Tibial artery (tissue), 4 donors: ENCODE measurements at regions of chr12 and their contacts with region 1.

Region 1: DNA sequence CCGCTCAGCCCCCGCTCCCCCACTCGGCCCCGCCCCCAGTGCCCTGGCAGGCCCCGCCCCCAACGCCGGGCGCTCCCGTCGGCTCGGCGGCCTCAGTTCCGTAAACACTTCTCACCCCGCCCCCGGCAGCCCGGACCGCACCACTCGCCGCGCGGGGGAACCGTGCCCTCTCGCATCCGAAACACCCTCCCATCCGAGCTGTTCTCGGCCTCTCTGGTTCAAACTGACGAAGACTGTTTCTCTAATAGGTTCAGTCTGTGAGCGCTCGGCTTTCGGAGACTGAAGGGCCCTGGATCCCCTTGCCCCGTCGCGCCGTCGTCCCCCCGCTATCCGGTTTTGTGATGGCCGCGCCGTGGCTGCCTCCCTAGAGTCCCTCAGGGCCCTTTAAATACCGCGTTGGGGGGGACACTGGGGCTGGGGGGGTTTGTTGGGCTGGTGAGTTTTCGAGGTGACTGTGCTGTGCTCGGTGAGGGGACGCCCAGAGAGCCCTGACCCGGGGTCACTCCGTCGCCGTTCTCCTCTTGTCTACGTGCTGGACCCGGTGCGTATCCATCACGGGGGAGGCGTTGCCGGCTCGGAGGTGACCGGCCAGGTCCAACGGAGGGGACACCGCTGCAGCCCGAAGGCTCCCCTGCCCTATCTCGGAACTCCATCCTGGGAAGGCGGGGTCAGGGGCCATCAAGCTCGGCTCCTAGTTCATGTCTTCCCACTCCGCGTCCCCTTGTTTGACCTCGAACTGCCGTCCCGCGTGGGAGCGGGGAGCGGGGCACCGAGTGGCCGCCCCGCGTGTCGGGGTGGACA is at the start of gene TCP11L2:
- DNase-seq: peak; percentile 88 to 94
- H3K4me3 ChIP-seq: peak within 1 kb of the TSS; percentile 81 to 97
- H3K27ac ChIP-seq: peak within 1 kb of the TSS; percentile 88 to 97
- H3K4me1 ChIP-seq: peaks cover 4 to 41% (median 27%) of the 10 kb centered on the region in 4 donors
- H3K27me3 ChIP-seq: no peaks in the 10 kb centered on the region
- CTCF ChIP-seq: no peak

Region 2: GRCh38 chr12:106247674-106248311 is 54.8 kb before region 1 on chr12 and contains the start of gene CKAP4:
- intact Hi-C with region 1: loop called (anchors 2 kb)
- DNase-seq: peak; percentile 71 to 92
- H3K4me3 ChIP-seq: peak within 1 kb of the TSS; percentile 94 to 96
- H3K27ac ChIP-seq: peak within 1 kb of the TSS; percentile 100
- H3K4me1 ChIP-seq: peaks cover 0 to 42% (median 28%) of the 10 kb centered on the region in 4 donors
- H3K27me3 ChIP-seq: no peaks in the 10 kb centered on the region
- CTCF ChIP-seq: peak in 1 of 2 experiments; percentile 11

Region 3: GRCh38 chr12:106357549-106358395 is 55.2 kb after region 1 on chr12 and contains the start of gene POLR3B:
- intact Hi-C with region 1: loop called (anchors 10 kb)
- DNase-seq: peak; percentile 96 to 98
- H3K4me3 ChIP-seq: peak within 1 kb of the TSS; percentile 69 to 87
- H3K27ac ChIP-seq: peak within 1 kb of the TSS; percentile 87 to 88
- H3K4me1 ChIP-seq: peaks cover 0 to 19% (median 10%) of the 10 kb centered on the region in 4 donors
- H3K27me3 ChIP-seq: no peaks in the 10 kb centered on the region
- CTCF ChIP-seq: peak; percentile 85 to 87

Region 4: GRCh38 chr12:106386813-106387535 is 84.4 kb after region 1 on chr12:
- intact Hi-C with region 1: no loop called
- DNase-seq: no peak
- H3K4me3 ChIP-seq: no peak overlapping the region
- H3K27ac ChIP-seq: no peak overlapping the region
- H3K4me1 ChIP-seq: no peaks in the 10 kb centered on the region
- H3K27me3 ChIP-seq: no peaks in the 10 kb centered on the region
- CTCF ChIP-seq: no peak